Activated naive CD4-positive, alpha-beta T cell treated with anti-CD3 and anti-CD28 coated beads for 36 hours (primary cell): ENCODE measurements at regions of chr10 and their contacts with region 1.

Region 1: GRCh38 chr10:112183329-112184051 is at the start of gene GPAM:
- DNase-seq: peak; percentile 97
- H3K4me3 Mint-ChIP-seq: peak within 1 kb of the TSS; percentile 85
- H3K27ac Mint-ChIP-seq: peak within 1 kb of the TSS; percentile 74
- H3K4me1 Mint-ChIP-seq: peaks cover 20% of the 10 kb centered on the region
- H3K27me3 Mint-ChIP-seq: no peaks in the 10 kb centered on the region
- total RNA-seq, gene GPAM: 7.3 to 8.1 TPM

Region 2: GRCh38 chr10:112173206-112173605 is 10.3 kb before region 1 on chr10:
- CTCF ChIA-PET with region 1: interaction called, 11 read pairs
- intact Hi-C with region 1: no loop called
- DNase-seq: no peak
- H3K4me3 Mint-ChIP-seq: no peak overlapping the region
- H3K27ac Mint-ChIP-seq: no peak overlapping the region
- H3K4me1 Mint-ChIP-seq: no peaks in the 10 kb centered on the region
- H3K27me3 Mint-ChIP-seq: no peaks in the 10 kb centered on the region

Region 3: GRCh38 chr10:112446855-112447711 is 263.6 kb after region 1 on chr10 and contains the starts of genes VTI1A and ZDHHC6:
- CTCF ChIA-PET with region 1: no interaction called
- intact Hi-C with region 1: loop called (anchors 5 kb)
- DNase-seq: peak; percentile 89
- H3K4me3 Mint-ChIP-seq: peak within 1 kb of the TSS; percentile 84
- H3K27ac Mint-ChIP-seq: peak within 1 kb of the TSS; percentile 86
- H3K4me1 Mint-ChIP-seq: peaks cover 57% of the 10 kb centered on the region
- H3K27me3 Mint-ChIP-seq: no peaks in the 10 kb centered on the region
- total RNA-seq, gene VTI1A: 24.9 to 28.4 TPM
- total RNA-seq, gene ZDHHC6: 37.8 to 39.0 TPM